ENCODE measurements at regions of chr1 and their contacts with region 1.

Region 1: GRCh38 chr1:117758444-117759316 is 152.8 kb downstream of the TENT5C start:
- DNase-seq: peak; percentile 75
- CTCF ChIP-seq: peak; percentile 75

Region 2: GRCh38 chr1:117067533-117068370 is 690.9 kb before region 1 on chr1:
- CTCF ChIA-PET with region 1: interaction called, 28 read pairs
- POLR2A ChIA-PET with region 1: no interaction called
- DNase-seq: peak; percentile 50
- CTCF ChIP-seq: peak; percentile 68

Region 3: DNA sequence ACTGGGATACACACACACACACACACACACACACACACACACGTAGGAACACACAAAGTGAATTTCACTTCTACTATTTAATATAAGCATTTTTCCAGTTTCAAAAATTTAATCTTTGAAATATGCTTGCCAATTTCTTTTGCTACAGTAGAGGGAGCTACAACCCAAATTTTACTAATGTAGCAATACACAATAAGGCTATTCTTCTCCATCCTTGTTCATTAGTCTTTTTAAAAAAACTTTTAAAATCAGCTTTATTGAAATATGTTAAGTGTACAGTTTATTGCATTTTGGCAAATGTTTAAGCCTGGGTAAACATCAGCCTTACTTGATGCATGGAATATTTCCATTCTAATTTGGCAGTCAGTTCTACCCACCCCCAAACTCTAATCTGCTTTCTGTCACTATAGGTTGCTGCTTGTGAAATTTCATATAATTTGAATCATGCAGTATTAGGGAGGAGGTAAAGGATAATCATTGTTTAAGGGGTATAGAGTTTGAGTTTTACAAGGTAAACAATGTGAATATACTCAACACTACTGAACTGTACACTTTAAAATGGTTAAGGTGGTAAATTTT is 245.8 kb before region 1 on chr1:
- CTCF ChIA-PET with region 1: interaction called, 91 read pairs
- POLR2A ChIA-PET with region 1: no interaction called
- DNase-seq: no peak
- CTCF ChIP-seq: peak; percentile 51

Region 4: GRCh38 chr1:117541003-117541402 is 217.7 kb before region 1 on chr1:
- CTCF ChIA-PET with region 1: interaction called, 72 read pairs
- POLR2A ChIA-PET with region 1: no interaction called
- DNase-seq: no peak
- CTCF ChIP-seq: no peak

Region 5: GRCh38 chr1:117596023-117596720 is 162.5 kb before region 1 on chr1:
- CTCF ChIA-PET with region 1: no interaction called
- POLR2A ChIA-PET with region 1: no interaction called
- DNase-seq: no peak
- CTCF ChIP-seq: no peak

Region 6: GRCh38 chr1:117627546-117628130 is 131.0 kb before region 1 on chr1:
- CTCF ChIA-PET with region 1: no interaction called
- POLR2A ChIA-PET with region 1: no interaction called
- DNase-seq: no peak
- CTCF ChIP-seq: no peak

Region 7: GRCh38 chr1:117710710-117711109 is 48.0 kb before region 1 on chr1:
- CTCF ChIA-PET with region 1: interaction called, 26 read pairs
- POLR2A ChIA-PET with region 1: no interaction called
- DNase-seq: no peak
- CTCF ChIP-seq: peak; percentile 22

Region 8: GRCh38 chr1:117740496-117740895 is 18.2 kb before region 1 on chr1:
- CTCF ChIA-PET with region 1: interaction called, 18 read pairs
- POLR2A ChIA-PET with region 1: no interaction called
- DNase-seq: no peak
- CTCF ChIP-seq: no peak

Region 9: GRCh38 chr1:117770981-117771531 is 12.4 kb after region 1 on chr1:
- CTCF ChIA-PET with region 1: interaction called, 46 read pairs
- POLR2A ChIA-PET with region 1: no interaction called
- DNase-seq: no peak
- CTCF ChIP-seq: no peak